Activated CD4-positive, alpha-beta T cell treated with anti-CD3 and anti-CD28 coated beads, Interleukin-2, amount 10 ng/mL, durations not matched to agents 24 days and 14 days (primary cell): ENCODE measurements at regions of chr17 and their contacts with region 1.

Region 1: DNA sequence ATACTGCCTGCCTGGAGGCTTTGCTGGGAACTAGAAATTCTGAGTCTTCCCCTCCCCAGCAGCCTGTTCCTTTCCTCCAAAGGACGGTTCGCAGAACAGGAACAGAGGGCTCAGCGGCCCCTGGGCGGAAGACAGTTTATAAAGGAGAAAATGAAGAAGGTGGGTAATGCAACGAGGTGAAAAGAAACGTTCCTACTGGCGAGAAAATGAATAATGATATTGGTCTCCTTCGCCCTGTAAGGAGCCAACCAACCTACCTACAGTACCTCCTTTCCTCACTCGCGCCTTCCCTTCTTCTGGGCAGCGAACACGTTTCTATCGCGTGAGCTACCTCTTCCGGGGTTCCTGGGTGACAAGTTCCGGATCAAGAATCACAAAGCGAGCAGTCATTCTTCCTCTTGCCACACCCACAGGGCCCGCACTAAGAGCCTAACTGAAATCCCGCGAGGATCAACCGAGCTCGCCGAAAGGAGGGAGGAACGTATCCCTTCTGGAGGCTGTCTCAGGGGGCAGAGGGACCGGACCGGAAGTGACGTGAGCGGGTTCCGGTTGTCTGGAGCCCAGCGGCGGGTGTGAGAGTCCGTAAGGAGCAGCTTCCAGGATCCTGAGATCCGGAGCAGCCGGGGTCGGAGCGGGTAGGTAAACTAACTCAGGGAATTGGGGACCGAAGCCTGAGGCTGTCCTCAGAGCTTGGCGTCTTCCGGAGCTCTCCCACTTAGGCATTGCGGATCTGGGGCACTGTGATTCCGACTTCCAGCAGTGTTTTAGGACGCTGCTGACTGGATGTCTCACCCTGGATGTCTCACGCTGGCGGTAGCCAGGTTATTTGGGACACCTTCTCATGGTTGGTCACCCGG is at the starts of genes PTRH2 and VMP1:
- DNase-seq: peak; percentile 98
- H3K4me3 Mint-ChIP-seq: peak within 1 kb of the TSS; percentile 91
- H3K27ac Mint-ChIP-seq: peak within 1 kb of the TSS; percentile 87
- H3K4me1 Mint-ChIP-seq: peaks cover 43% of the 10 kb centered on the region
- H3K27me3 Mint-ChIP-seq: no peaks in the 10 kb centered on the region
- total RNA-seq, gene PTRH2: 49.0 and 50.3 TPM in 2 replicates
- total RNA-seq, gene VMP1: 417 and 422 TPM in 2 replicates

Region 2: DNA sequence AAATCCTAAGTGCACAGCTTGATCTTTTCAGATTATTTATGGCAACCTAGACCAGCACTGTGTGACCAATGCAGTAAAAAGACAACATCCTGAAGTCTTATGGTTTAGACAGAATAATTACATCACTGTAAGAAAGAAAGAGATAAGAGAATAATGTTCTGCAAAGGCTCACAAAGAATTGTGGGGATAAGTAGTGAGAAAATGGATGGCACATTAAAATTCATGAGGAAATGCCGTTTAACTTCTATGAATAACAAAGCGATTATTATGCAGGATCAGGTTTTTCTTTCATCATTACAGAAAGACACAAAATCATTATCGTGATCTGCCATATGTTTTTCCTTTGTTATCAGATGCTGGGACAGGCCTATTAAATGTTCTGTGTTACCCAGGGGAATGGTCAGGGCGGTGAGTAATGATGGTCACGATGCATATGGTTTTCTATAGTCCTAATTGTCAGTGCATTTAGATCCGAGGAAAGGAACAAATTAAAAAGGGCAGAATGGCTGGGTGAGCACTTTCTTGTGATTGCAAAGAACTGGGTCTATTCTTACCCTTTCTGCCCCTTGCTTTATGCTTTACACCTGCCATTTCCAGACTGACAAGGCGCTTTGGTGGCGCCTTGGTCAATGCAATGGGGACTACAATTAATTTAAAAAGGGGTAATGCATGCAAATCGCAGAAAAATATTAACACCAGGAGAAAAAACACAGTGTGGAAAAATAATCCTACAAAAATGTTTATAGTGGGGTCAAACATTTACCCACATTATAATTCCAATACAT is 160.0 kb before region 1 on chr17:
- intact Hi-C with region 1: no loop called
- DNase-seq: no peak
- H3K4me3 Mint-ChIP-seq: no peak overlapping the region
- H3K27ac Mint-ChIP-seq: no peak overlapping the region
- H3K4me1 Mint-ChIP-seq: no peaks in the 10 kb centered on the region
- H3K27me3 Mint-ChIP-seq: peaks cover 12% of the 10 kb centered on the region

Region 3: GRCh38 chr17:59769891-59770290 is 62.5 kb after region 1 on chr17:
- intact Hi-C with region 1: no loop called
- DNase-seq: no peak
- H3K4me3 Mint-ChIP-seq: no peak overlapping the region
- H3K27ac Mint-ChIP-seq: peak overlapping the region; percentile 56
- H3K4me1 Mint-ChIP-seq: peaks cover 23% of the 10 kb centered on the region
- H3K27me3 Mint-ChIP-seq: no peaks in the 10 kb centered on the region

Region 4: DNA sequence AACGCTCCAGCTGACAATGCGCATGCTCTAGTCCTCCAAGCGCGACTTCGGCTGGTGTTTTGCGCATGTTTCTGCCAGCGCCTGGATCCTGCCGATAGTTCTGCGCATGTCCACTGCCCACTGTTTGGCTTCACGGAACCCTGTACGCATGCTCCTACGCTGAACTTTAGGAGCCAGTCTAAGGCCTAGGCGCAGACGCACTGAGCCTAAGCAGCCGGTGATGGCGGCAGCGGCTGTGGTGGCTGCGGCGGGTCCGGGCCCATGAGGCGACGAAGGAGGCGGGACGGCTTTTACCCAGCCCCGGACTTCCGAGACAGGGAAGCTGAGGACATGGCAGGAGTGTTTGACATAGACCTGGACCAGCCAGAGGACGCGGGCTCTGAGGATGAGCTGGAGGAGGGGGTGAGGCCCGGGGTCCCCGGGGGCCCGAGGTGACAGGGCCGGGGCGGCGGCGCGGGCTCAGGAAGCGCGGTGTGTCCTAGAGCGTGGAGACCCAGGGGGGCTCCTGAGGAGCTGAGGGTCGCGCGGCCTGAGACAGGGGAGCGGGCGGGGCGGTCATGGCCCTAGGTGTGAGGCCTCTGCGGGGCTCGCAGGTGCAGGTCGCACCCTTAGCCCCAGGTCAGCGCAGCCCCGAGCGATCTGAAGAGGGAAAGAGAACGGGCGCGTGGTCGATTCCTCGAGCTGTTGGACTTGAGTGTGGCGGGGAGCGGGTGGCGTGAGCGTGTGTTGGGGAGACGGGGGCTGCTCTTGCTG is 185.8 kb after region 1 on chr17 and contains the starts of genes RPS6KB1 and TUBD1:
- intact Hi-C with region 1: loop called (anchors 1 kb)
- DNase-seq: peak; percentile 99
- H3K4me3 Mint-ChIP-seq: peak within 1 kb of the TSS; percentile 100
- H3K27ac Mint-ChIP-seq: peak within 1 kb of the TSS; percentile 100
- H3K4me1 Mint-ChIP-seq: peaks cover 40% of the 10 kb centered on the region
- H3K27me3 Mint-ChIP-seq: peaks cover 3% of the 10 kb centered on the region
- total RNA-seq, gene RPS6KB1: 64.0 and 66.4 TPM in 2 replicates
- total RNA-seq, gene TUBD1: 11.0 and 12.1 TPM in 2 replicates

Region 5: GRCh38 chr17:59941131-59941530 is 233.8 kb after region 1 on chr17:
- intact Hi-C with region 1: no loop called
- DNase-seq: no peak
- H3K4me3 Mint-ChIP-seq: peak overlapping the region; percentile 35
- H3K27ac Mint-ChIP-seq: peak overlapping the region; percentile 89
- H3K4me1 Mint-ChIP-seq: peaks cover 32% of the 10 kb centered on the region
- H3K27me3 Mint-ChIP-seq: no peaks in the 10 kb centered on the region